Dendritic cell treated with granulocyte-macrophage colony-stimulating factor and Interleukin-4, amounts not matched to agents 40 ng/mL and 50 ng/mL, for 4 days (primary cell): ENCODE measurements at regions of chr11 and their contacts with region 1.

Region 1: DNA sequence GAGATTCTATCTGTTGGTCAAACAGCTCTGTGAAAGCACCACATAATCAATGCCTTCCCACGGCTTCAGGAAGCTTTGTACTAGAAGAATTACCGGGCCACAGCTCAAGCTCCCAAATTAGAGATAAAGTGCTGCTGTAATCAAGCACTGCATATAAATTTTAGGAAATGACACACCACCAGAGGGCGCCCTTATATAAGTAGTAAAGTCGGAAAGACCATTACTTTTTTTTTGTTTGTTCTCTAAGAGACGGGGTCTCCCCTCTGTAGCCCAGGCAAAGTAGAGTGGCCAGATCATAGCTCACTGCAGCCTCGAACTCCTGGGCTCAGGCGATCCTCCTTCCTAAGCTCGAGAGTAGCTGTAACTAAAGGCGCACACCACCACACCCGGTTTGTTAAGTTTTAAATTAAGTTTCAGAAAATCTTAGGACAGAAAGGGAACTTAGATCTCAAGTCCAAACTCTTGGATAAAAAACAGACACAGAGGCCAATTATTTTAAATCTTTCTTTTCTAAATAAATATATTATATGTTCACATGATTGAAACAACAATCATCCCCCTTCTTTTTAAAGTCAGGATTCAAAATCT is 32.6 kb downstream of the PRCP start:
- H3K4me3 Mint-ChIP-seq: peak overlapping the region; percentile 72
- H3K27ac Mint-ChIP-seq: peak overlapping the region; percentile 63
- H3K4me1 Mint-ChIP-seq: peaks cover 42% of the 10 kb centered on the region
- H3K27me3 Mint-ChIP-seq: no peaks in the 10 kb centered on the region

Region 2: GRCh38 chr11:82718307-82718706 is 149.3 kb before region 1 on chr11:
- intact Hi-C with region 1: loop called (anchors 5 kb)
- H3K4me3 Mint-ChIP-seq: no peak overlapping the region
- H3K27ac Mint-ChIP-seq: no peak overlapping the region
- H3K4me1 Mint-ChIP-seq: no peaks in the 10 kb centered on the region
- H3K27me3 Mint-ChIP-seq: peaks cover 2% of the 10 kb centered on the region

Region 3: GRCh38 chr11:82775736-82776346 is 91.7 kb before region 1 on chr11:
- intact Hi-C with region 1: loop called (anchors 1 kb)
- H3K4me3 Mint-ChIP-seq: no peak overlapping the region
- H3K27ac Mint-ChIP-seq: no peak overlapping the region
- H3K4me1 Mint-ChIP-seq: no peaks in the 10 kb centered on the region
- H3K27me3 Mint-ChIP-seq: no peaks in the 10 kb centered on the region

Region 4: GRCh38 chr11:82927254-82927880 is 59.8 kb after region 1 on chr11:
- intact Hi-C with region 1: loop called (anchors 2 kb)
- H3K4me3 Mint-ChIP-seq: no peak overlapping the region
- H3K27ac Mint-ChIP-seq: no peak overlapping the region
- H3K4me1 Mint-ChIP-seq: no peaks in the 10 kb centered on the region
- H3K27me3 Mint-ChIP-seq: no peaks in the 10 kb centered on the region